ENCODE measurements at regions of chr17 and their contacts with region 1.

Region 1: GRCh38 chr17:4881761-4882555 is 17.4 kb upstream of the C17orf107 start:
- DNase-seq: peak; percentile 80
- H3K4me3 ChIP-seq: no peak overlapping the region
- H3K27ac ChIP-seq: no peak overlapping the region
- H3K4me1 ChIP-seq: no peaks in the 10 kb centered on the region
- H3K27me3 ChIP-seq: no peaks in the 10 kb centered on the region
- CTCF ChIP-seq: peak; percentile 72 to 81 (median 76)
- EP300 ChIP-seq: no peak
- POLR2A ChIP-seq: no peak

Region 2: GRCh38 chr17:4709794-4710692 is 171.9 kb before region 1 on chr17 and contains the start of gene ARRB2:
- in situ Hi-C with region 1: loop called in 1 of 4 experiments (anchors 10 kb)
- intact Hi-C with region 1: no loop called
- DNase-seq: peak; percentile 97
- H3K4me3 ChIP-seq: peak within 1 kb of the TSS; percentile 65 to 88 (median 70)
- H3K27ac ChIP-seq: peak within 1 kb of the TSS; percentile 89 to 92 (median 91)
- H3K4me1 ChIP-seq: peaks cover 11 to 42% (median 25%) of the 10 kb centered on the region in 4 donors
- H3K27me3 ChIP-seq: no peaks in the 10 kb centered on the region
- CTCF ChIP-seq: peak; percentile 61 to 90 (median 64)
- EP300 ChIP-seq: no peak
- POLR2A ChIP-seq: peak; percentile 52
- total RNA-seq, gene ARRB2: 19.3 to 47.9 (median 36.8) TPM

Region 3: GRCh38 chr17:4739122-4740024 is 142.6 kb before region 1 on chr17 and contains the starts of genes CXCL16 and ZMYND15:
- in situ Hi-C with region 1: loop called in 1 of 4 experiments (anchors 10 kb)
- intact Hi-C with region 1: no loop called
- DNase-seq: peak; percentile 83
- H3K4me3 ChIP-seq: peak within 1 kb of the TSS; percentile 63 to 94 (median 80)
- H3K27ac ChIP-seq: peak within 1 kb of the TSS; percentile 42 to 75 (median 72)
- H3K4me1 ChIP-seq: peaks cover 6 to 16% (median 13%) of the 10 kb centered on the region in 4 donors
- H3K27me3 ChIP-seq: peaks cover 2% of the 10 kb centered on the region
- CTCF ChIP-seq: peak in 1 of 5 experiments; percentile 10
- EP300 ChIP-seq: no peak
- POLR2A ChIP-seq: peak; percentile 53
- total RNA-seq, gene CXCL16: 13.0 to 72.6 (median 27.0) TPM
- total RNA-seq, gene ZMYND15: 0.82 to 1.4 TPM in 2 of 4 donors, not detected in the others

Region 4: GRCh38 chr17:4769628-4770027 is 112.3 kb before region 1 on chr17:
- in situ Hi-C with region 1: no loop called
- intact Hi-C with region 1: no loop called
- DNase-seq: no peak
- H3K4me3 ChIP-seq: no peak overlapping the region
- H3K27ac ChIP-seq: no peak overlapping the region
- H3K4me1 ChIP-seq: peaks cover 0 to 23% (median 5%) of the 10 kb centered on the region in 4 donors
- H3K27me3 ChIP-seq: no peaks in the 10 kb centered on the region
- CTCF ChIP-seq: no peak
- EP300 ChIP-seq: no peak
- POLR2A ChIP-seq: no peak

Region 5: DNA sequence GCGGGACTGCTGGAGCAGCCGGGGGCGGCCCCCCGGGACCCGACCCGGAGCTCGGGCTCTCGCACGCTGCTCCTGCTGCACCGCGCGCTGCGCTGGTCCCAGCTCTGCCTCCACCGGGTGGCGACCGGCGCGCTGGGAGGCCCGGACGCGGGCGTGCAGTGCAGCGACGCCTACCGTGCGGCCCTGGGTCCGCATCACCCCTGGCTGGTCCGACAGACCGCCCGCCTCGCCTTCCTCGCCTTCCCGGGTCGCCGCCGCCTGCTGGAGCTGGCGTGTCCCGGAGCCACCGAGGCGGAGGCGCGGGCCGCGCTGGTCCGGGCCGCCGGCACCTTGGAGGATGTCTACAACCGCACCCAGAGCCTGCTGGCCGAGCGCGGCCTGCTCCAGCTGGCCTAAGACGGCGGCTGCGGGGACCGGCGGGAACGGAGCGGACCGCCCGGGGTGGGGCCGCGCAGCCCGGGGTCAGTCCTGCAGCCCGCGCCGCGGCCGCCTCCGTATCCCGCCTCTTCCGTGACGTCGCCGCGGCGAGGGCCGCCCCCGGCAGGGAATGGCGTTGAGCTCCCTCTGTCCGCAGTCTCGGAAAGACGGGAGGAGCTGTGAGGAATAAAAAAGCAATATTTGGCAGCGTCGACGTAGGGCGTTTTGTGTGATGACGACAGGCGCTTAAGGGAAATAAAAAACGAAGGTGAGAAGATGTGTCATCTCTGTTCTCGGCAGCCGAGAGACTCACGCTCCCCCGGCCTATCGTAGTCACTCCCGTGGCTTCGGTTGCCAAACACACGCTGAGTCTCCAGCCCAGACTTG is 91.9 kb before region 1 on chr17:
- in situ Hi-C with region 1: loop called (anchors 10 to 25 kb)
- intact Hi-C with region 1: loop called (anchors 5 kb)
- DNase-seq: peak; percentile 91
- H3K4me3 ChIP-seq: peak overlapping the region; percentile 49 to 73 (median 68)
- H3K27ac ChIP-seq: peak overlapping the region; percentile 95 to 99 (median 98)
- H3K4me1 ChIP-seq: peaks cover 11 to 42% (median 37%) of the 10 kb centered on the region in 4 donors
- H3K27me3 ChIP-seq: peaks cover 13% of the 10 kb centered on the region
- CTCF ChIP-seq: peak; percentile 52 to 96 (median 74)
- EP300 ChIP-seq: no peak
- POLR2A ChIP-seq: peak; percentile 86

Region 6: GRCh38 chr17:4806777-4807604 is 75.0 kb before region 1 on chr17 and contains the start of gene PLD2:
- in situ Hi-C with region 1: no loop called
- intact Hi-C with region 1: loop called (anchors 5 kb)
- DNase-seq: peak; percentile 91
- H3K4me3 ChIP-seq: peak within 1 kb of the TSS; percentile 74 to 98 (median 91)
- H3K27ac ChIP-seq: peak within 1 kb of the TSS; percentile 82 to 93 (median 82)
- H3K4me1 ChIP-seq: peaks cover 11 to 20% (median 17%) of the 10 kb centered on the region in 4 donors
- H3K27me3 ChIP-seq: no peaks in the 10 kb centered on the region
- CTCF ChIP-seq: no peak
- EP300 ChIP-seq: no peak
- POLR2A ChIP-seq: no peak
- total RNA-seq, gene PLD2: 13.9 to 81.9 (median 18.9) TPM

Region 7: GRCh38 chr17:4833178-4833940 is 48.6 kb before region 1 on chr17 and contains the start of gene MINK1:
- in situ Hi-C with region 1: no loop called
- intact Hi-C with region 1: loop called (anchors 1 kb)
- DNase-seq: peak; percentile 93
- H3K4me3 ChIP-seq: peak within 1 kb of the TSS; percentile 52 to 87 (median 78)
- H3K27ac ChIP-seq: peak within 1 kb of the TSS; percentile 95 to 98 (median 96)
- H3K4me1 ChIP-seq: peaks cover 10 to 43% (median 23%) of the 10 kb centered on the region in 4 donors
- H3K27me3 ChIP-seq: no peaks in the 10 kb centered on the region
- CTCF ChIP-seq: no peak
- EP300 ChIP-seq: no peak
- POLR2A ChIP-seq: peak; percentile 91
- total RNA-seq, gene MINK1: 128 to 406 (median 181) TPM